ENCODE measurements at regions of chr6 and their contacts with region 1.

Region 1: GRCh38 chr6:132041706-132042105 is 90.5 kb upstream of the CCN2 start:
- DNase-seq: no peak
- H3K4me3 ChIP-seq: no peak overlapping the region
- H3K27ac ChIP-seq: no peak overlapping the region
- H3K4me1 ChIP-seq: no peaks in the 10 kb centered on the region
- H3K27me3 ChIP-seq: no peaks in the 10 kb centered on the region
- CTCF ChIP-seq: no peak
- EP300 ChIP-seq: no peak
- POLR2A ChIP-seq: no peak
- RAD21 ChIP-seq: no peak

Region 2: GRCh38 chr6:131982740-131983259 is 58.9 kb before region 1 on chr6:
- CTCF ChIA-PET with region 1: no interaction called
- POLR2A ChIA-PET with region 1: no interaction called
- DNase-seq: no peak
- H3K4me3 ChIP-seq: no peak overlapping the region
- H3K27ac ChIP-seq: no peak overlapping the region
- H3K4me1 ChIP-seq: no peaks in the 10 kb centered on the region
- H3K27me3 ChIP-seq: no peaks in the 10 kb centered on the region
- CTCF ChIP-seq: no peak
- EP300 ChIP-seq: no peak
- POLR2A ChIP-seq: no peak
- RAD21 ChIP-seq: no peak

Region 3: GRCh38 chr6:132023490-132023889 is 18.2 kb before region 1 on chr6:
- CTCF ChIA-PET with region 1: interaction called, 11 read pairs
- POLR2A ChIA-PET with region 1: interaction called, 3 read pairs
- DNase-seq: no peak
- H3K4me3 ChIP-seq: no peak overlapping the region
- H3K27ac ChIP-seq: no peak overlapping the region
- H3K4me1 ChIP-seq: peaks cover 2 to 13% (median 7%) of the 10 kb centered on the region in 4 experiments; a peak in 3 of 7 replicates
- H3K27me3 ChIP-seq: no peaks in the 10 kb centered on the region
- CTCF ChIP-seq: peak; percentile 24 to 66 (median 49)
- EP300 ChIP-seq: no peak
- POLR2A ChIP-seq: no peak
- RAD21 ChIP-seq: peak in 1 of 2 experiments; percentile 42; a peak in 2 of 4 replicates

Region 4: DNA sequence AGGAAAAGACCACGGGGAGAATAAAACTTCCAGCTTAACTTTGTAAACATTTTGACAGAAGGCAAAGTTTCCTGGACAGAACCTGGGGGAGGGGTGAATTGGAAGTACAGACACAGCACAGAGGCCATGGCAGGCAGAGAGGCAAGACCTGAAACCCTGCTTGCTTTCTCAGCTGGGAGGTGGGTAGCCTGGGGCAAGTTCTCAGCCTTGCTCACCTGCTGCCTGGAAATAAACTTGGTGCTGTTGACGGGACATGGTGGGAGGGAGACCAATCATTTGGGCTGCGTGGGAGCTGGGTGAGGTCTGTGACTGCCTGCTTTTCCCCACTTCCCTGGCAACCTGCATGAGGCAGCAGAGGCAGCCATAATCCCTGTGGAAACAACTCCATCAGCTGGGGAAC is 138.2 kb after region 1 on chr6:
- CTCF ChIA-PET with region 1: no interaction called
- POLR2A ChIA-PET with region 1: no interaction called
- DNase-seq: no peak
- H3K4me3 ChIP-seq: no peak overlapping the region
- H3K27ac ChIP-seq: no peak overlapping the region
- H3K4me1 ChIP-seq: no peaks in the 10 kb centered on the region
- H3K27me3 ChIP-seq: no peaks in the 10 kb centered on the region
- CTCF ChIP-seq: no peak
- EP300 ChIP-seq: no peak
- POLR2A ChIP-seq: no peak
- RAD21 ChIP-seq: no peak

Measured in H1 (cell line).